GM12878 (cell line): ENCODE measurements at regions of chr9 and their contacts with region 1.

Region 1: GRCh38 chr9:99336005-99336404 is 113.9 kb downstream of the SEC61B start:
- DNase-seq: no peak
- ATAC-seq: peak; percentile 68
- H3K4me3 ChIP-seq: no peak overlapping the region
- H3K27ac ChIP-seq: no peak overlapping the region
- H3K4me1 ChIP-seq: no peaks in the 10 kb centered on the region
- H3K27me3 ChIP-seq: no peaks in the 10 kb centered on the region
- CTCF ChIP-seq: peak in 1 of 3 experiments; percentile 4; a peak in 1 of 6 replicates
- EP300 ChIP-seq: no peak
- POLR2A ChIP-seq: no peak
- RAD21 ChIP-seq: 0 out of 2 replicates have a peak, but pooled peaks have one; percentile 18

Region 2: DNA sequence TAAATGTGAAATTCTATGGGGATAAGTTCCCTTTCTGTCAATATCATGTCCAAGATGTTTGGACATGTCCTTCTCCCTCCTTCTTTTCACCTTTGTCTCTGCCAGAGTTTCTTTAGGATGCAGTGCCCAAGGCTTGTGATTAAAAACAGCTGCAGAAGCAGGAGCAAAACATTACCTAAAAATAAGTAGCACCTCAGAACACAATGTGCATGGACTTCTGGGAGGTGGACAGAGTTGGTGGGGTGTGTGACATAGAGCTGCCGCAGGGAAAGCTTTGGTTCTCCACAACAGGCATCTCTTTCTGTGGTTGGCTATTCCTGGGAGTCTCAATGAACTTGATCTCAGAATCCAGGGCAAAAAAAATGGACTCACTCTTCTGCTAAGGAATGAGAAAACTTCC is 17.0 kb before region 1 on chr9:
- CTCF ChIA-PET with region 1: interaction called, 5 read pairs
- POLR2A ChIA-PET with region 1: interaction called, 4 read pairs
- RAD21 ChIA-PET with region 1: interaction called, 3 read pairs
- SMC1A ChIA-PET with region 1: interaction called, 11 read pairs
- in situ Hi-C with region 1: no loop called
- intact Hi-C with region 1: no loop called
- DNase-seq: no peak
- ATAC-seq: no peak
- H3K4me3 ChIP-seq: no peak overlapping the region
- H3K27ac ChIP-seq: no peak overlapping the region
- H3K4me1 ChIP-seq: no peaks in the 10 kb centered on the region
- H3K27me3 ChIP-seq: no peaks in the 10 kb centered on the region
- CTCF ChIP-seq: no peak
- EP300 ChIP-seq: no peak
- POLR2A ChIP-seq: no peak
- RAD21 ChIP-seq: no peak

Region 3: GRCh38 chr9:99377790-99378775 is 42.1 kb after region 1 on chr9:
- CTCF ChIA-PET with region 1: no interaction called
- POLR2A ChIA-PET with region 1: no interaction called
- RAD21 ChIA-PET with region 1: no interaction called
- SMC1A ChIA-PET with region 1: no interaction called
- in situ Hi-C with region 1: no loop called
- intact Hi-C with region 1: no loop called
- DNase-seq: no peak
- ATAC-seq: no peak
- H3K4me3 ChIP-seq: no peak overlapping the region
- H3K27ac ChIP-seq: no peak overlapping the region
- H3K4me1 ChIP-seq: no peaks in the 10 kb centered on the region
- H3K27me3 ChIP-seq: no peaks in the 10 kb centered on the region; a peak in 1 of 4 replicates
- CTCF ChIP-seq: no peak
- EP300 ChIP-seq: no peak
- POLR2A ChIP-seq: no peak
- RAD21 ChIP-seq: no peak